PC-3 (cell line): ENCODE measurements at regions of chr6 and their contacts with region 1.

Region 1: DNA sequence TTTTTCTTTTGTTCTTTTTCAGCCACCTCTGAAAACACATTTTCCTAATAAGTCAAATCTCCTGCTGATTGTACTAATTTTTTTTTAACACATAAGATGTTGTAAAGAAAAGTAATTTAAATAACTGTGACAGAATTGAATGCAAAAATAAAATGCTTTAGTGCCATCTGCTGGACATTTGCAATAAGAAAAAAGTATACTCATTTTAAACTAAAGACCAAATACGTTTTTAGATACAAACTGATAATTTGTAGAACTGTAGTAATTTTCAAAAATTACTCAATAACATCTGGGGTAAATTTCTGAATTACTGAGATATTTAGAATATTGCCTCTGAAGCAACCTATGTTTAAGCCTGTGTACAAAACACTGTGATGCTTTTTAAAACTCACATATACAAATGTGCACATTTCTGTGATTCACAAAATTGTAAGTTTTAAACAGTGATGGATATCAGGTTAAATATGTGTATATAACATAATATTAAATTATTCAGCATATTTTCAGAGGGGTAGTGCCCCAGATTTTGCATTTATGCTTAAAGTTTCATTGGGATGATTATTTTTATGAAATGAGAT is 198.7 kb downstream of the RIMS1 start:
- DNase-seq: peak; percentile 25
- ATAC-seq: no peak
- H3K4me3 ChIP-seq: no peak overlapping the region
- H3K27ac ChIP-seq: no peak overlapping the region
- H3K4me1 ChIP-seq: no peaks in the 10 kb centered on the region
- H3K27me3 ChIP-seq: peaks cover 11% of the 10 kb centered on the region; the same call in 1 of the 2 replicates
- CTCF ChIP-seq: peak; percentile 64

Region 2: GRCh38 chr6:71621918-71622519 is 463.1 kb before region 1 on chr6:
- CTCF ChIA-PET with region 1: no interaction called
- POLR2A ChIA-PET with region 1: interaction called, 3 read pairs
- intact Hi-C with region 1: loop called (anchors 2 kb)
- DNase-seq: peak; percentile 47
- ATAC-seq: 0 out of 2 replicates have a peak, but pooled peaks have one; percentile 37
- H3K4me3 ChIP-seq: no peak overlapping the region
- H3K27ac ChIP-seq: no peak overlapping the region
- H3K4me1 ChIP-seq: no peaks in the 10 kb centered on the region
- H3K27me3 ChIP-seq: no peaks in the 10 kb centered on the region
- CTCF ChIP-seq: peak; percentile 63

Region 3: DNA sequence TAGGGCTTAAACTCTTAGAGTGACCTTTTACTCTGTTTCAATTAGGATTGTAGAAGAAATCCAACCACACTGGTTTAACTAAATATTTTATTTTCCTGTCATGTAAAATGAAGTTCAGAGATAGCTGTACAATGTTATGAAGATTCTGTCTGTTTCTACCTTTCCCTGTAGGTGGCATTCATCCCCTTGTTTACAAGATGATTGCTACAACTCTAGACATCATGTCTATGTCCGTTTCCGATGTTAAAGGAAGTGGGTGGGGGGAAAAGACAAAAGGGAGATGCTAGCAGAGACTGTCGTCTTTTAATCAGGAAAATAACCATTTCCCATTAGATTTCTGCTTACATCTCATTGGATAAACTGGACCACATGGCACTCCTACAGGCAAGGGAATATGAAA is 229.7 kb before region 1 on chr6:
- CTCF ChIA-PET with region 1: no interaction called
- POLR2A ChIA-PET with region 1: no interaction called
- intact Hi-C with region 1: loop called (anchors 10 kb)
- DNase-seq: peak; percentile 10
- ATAC-seq: peak; percentile 38; the same call in 1 of the 2 replicates
- H3K4me3 ChIP-seq: no peak overlapping the region
- H3K27ac ChIP-seq: no peak overlapping the region
- H3K4me1 ChIP-seq: no peaks in the 10 kb centered on the region
- H3K27me3 ChIP-seq: no peaks in the 10 kb centered on the region
- CTCF ChIP-seq: peak; percentile 46